WTC11 (cell line): ENCODE measurements at regions of chr17 and their contacts with region 1.

Region 1: DNA sequence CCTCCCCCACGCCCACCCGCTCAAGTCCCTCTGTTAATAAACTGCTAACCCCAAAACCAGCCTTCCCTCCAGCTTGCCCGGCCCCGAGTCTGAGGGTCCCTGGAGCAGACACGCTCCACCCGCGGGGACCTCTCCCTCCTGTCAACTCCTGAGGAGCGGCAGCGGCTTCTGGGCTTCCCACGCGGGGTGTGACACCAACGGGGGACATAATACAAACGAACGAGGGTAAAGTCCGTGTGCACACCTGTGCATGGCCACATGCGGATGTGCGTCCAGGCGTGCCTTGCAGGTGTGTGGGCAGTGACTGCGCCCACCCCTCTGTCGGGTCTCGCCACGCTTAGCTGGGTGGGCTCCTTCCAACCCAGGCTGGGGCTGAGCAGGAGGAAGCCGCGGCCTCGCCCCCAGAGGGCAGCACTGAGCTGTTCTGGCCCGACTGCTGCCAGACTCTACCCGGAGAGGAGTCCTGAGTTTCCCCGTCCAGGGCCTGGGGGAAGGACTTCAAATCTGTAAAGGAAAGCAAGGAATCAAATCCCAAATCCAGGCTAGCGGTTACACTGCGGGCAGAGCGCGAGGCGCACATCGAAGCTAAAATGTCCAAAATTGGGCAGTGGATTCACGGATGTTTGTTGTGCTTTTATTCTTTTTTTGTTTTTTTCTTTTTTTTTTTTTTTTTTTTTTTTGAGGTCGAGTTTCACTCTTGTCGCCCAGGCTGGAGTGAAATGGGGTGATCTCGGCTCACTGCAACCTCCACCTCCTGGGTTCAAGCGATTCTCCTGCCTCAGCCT is 24.2 kb upstream of the KRT17 start:
- DNase-seq: peak; percentile 94
- ATAC-seq: peak; percentile 81
- H3K4me3 Mint-ChIP-seq: peak overlapping the region; percentile 71
- H3K27ac Mint-ChIP-seq: no peak overlapping the region
- H3K4me1 Mint-ChIP-seq: peaks cover 2% of the 10 kb centered on the region
- H3K27me3 Mint-ChIP-seq: no peaks in the 10 kb centered on the region
- CTCF ChIP-seq: peak; percentile 90

Region 2: GRCh38 chr17:41521574-41522261 is 126.9 kb before region 1 on chr17:
- CTCF ChIA-PET with region 1: interaction called, 12 read pairs
- POLR2A ChIA-PET with region 1: no interaction called
- DNase-seq: peak; percentile 57
- ATAC-seq: peak; percentile 46
- H3K4me3 Mint-ChIP-seq: no peak overlapping the region
- H3K27ac Mint-ChIP-seq: peak overlapping the region; percentile 48; the same call in 1 of the 2 replicates
- H3K4me1 Mint-ChIP-seq: peaks cover 25% of the 10 kb centered on the region
- H3K27me3 Mint-ChIP-seq: no peaks in the 10 kb centered on the region; the same call in 1 of the 2 replicates
- CTCF ChIP-seq: no peak

Region 3: DNA sequence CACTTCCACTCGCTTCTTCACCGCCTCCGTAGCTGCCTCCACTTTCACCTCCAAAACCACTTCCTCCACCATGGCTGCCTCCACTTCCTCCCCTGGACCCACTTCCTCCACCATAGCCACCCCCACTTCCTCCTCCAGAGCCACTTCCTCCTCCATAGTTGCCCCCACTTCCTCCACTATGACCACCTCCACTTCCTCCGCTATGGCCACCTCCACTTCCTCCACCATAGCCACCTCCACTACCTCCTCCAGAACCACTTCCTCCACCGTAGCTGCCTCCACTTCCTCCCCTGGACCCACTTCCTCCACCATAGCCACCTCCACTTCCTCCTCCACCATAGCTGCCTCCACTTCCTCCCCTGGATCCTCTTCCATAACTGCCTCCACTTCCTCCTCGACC is 81.3 kb before region 1 on chr17:
- CTCF ChIA-PET with region 1: interaction called, 27 read pairs
- POLR2A ChIA-PET with region 1: no interaction called
- DNase-seq: no peak
- ATAC-seq: no peak
- H3K4me3 Mint-ChIP-seq: no peak overlapping the region
- H3K27ac Mint-ChIP-seq: no peak overlapping the region
- H3K4me1 Mint-ChIP-seq: no peaks in the 10 kb centered on the region
- H3K27me3 Mint-ChIP-seq: peaks cover 22% of the 10 kb centered on the region
- CTCF ChIP-seq: no peak

Region 4: GRCh38 chr17:41602524-41602923 is 46.1 kb before region 1 on chr17:
- CTCF ChIA-PET with region 1: interaction called, 10 read pairs
- POLR2A ChIA-PET with region 1: no interaction called
- DNase-seq: no peak
- ATAC-seq: no peak
- H3K4me3 Mint-ChIP-seq: no peak overlapping the region
- H3K27ac Mint-ChIP-seq: no peak overlapping the region
- H3K4me1 Mint-ChIP-seq: 0 out of 2 replicates have a peak, but pooled peaks cover 3% of the 10 kb centered on the region
- H3K27me3 Mint-ChIP-seq: peaks cover 8% of the 10 kb centered on the region; the same call in 1 of the 2 replicates
- CTCF ChIP-seq: no peak

Region 5: GRCh38 chr17:41635121-41636097 is 13.2 kb before region 1 on chr17:
- CTCF ChIA-PET with region 1: interaction called, 36 read pairs
- POLR2A ChIA-PET with region 1: no interaction called
- DNase-seq: no peak
- ATAC-seq: peak; percentile 62
- H3K4me3 Mint-ChIP-seq: no peak overlapping the region
- H3K27ac Mint-ChIP-seq: peak overlapping the region; percentile 84
- H3K4me1 Mint-ChIP-seq: peaks cover 10% of the 10 kb centered on the region
- H3K27me3 Mint-ChIP-seq: no peaks in the 10 kb centered on the region
- CTCF ChIP-seq: no peak

Region 6: GRCh38 chr17:41797377-41797776 is 148.8 kb after region 1 on chr17:
- CTCF ChIA-PET with region 1: no interaction called
- POLR2A ChIA-PET with region 1: no interaction called
- DNase-seq: no peak
- ATAC-seq: no peak
- H3K4me3 Mint-ChIP-seq: no peak overlapping the region
- H3K27ac Mint-ChIP-seq: no peak overlapping the region
- H3K4me1 Mint-ChIP-seq: peaks cover 51% of the 10 kb centered on the region
- H3K27me3 Mint-ChIP-seq: peaks cover 37% of the 10 kb centered on the region
- CTCF ChIP-seq: no peak

Region 7: DNA sequence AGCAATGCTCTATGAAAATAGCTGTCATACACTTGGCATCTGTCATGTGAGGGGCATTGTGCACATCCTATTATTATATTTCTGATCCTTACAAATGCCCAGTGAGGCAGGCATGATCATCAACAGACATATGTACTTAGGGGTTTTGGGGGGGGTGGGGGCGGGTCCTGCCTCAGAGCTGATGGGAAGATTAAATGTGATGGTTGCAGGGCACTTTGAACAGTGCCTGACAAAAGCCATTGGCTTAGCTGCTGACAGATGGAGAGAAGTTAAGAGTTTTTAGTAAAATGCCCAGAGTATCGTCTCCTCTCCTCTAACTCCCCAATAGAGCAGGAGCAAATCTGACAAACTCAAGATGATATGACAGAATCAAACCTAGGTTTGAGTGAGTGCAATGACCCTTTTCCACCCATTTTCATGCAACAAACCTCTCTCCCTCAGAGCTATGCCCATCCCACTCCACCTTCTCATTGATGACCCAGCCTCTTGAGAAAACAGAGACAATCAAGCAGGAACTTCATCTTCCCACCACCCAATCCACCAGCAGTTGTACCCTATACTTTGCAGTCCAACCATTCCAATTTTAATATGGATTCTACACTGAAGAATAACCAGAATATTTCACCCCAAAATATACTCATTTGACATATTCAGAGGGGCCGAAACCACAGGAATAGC is 211.8 kb after region 1 on chr17:
- CTCF ChIA-PET with region 1: no interaction called
- POLR2A ChIA-PET with region 1: no interaction called
- DNase-seq: no peak
- ATAC-seq: no peak
- H3K4me3 Mint-ChIP-seq: 0 out of 2 replicates have a peak overlapping the region, but pooled peaks have one; percentile 2
- H3K27ac Mint-ChIP-seq: peak overlapping the region; percentile 38
- H3K4me1 Mint-ChIP-seq: peaks cover 24% of the 10 kb centered on the region
- H3K27me3 Mint-ChIP-seq: no peaks in the 10 kb centered on the region
- CTCF ChIP-seq: no peak

Region 8: DNA sequence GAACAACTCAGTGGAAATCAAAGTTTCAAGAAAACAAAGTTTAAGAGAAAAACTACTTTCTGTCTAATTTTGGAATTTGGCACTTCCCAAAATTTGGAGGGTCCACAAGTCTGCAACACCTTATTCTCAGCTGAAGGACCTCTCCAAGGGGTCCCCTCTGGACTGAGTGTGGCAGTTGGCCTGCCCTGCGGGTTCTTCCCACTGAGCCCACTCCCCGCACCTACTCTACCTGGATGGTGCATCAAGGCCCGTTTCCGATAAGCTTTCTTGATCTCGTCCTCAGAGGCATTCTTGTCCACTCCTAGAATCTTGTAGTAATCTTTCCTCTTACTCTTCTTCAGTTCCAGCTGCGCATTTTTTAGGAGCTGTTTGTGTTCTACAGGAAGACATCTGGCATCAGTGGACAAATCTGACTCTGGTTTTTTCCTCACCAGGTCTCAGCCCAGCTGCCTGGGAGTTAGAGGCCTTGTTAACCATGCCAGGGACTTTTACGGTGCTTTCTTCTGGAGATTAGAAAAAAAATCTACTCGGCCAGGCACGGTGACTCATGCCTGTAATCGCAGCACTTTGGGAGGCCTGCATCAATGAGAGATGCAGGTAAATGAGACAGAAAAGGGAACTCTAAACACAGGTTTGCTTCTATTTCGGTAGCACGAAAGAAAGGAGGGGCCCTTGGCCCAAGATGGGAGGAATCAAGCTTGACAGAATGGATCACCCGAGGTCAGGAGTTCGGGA is 333.6 kb after region 1 on chr17:
- CTCF ChIA-PET with region 1: no interaction called
- POLR2A ChIA-PET with region 1: no interaction called
- DNase-seq: no peak
- ATAC-seq: no peak
- H3K4me3 Mint-ChIP-seq: no peak overlapping the region
- H3K27ac Mint-ChIP-seq: no peak overlapping the region; the same call in 1 of the 2 replicates
- H3K4me1 Mint-ChIP-seq: no peaks in the 10 kb centered on the region
- H3K27me3 Mint-ChIP-seq: no peaks in the 10 kb centered on the region
- CTCF ChIP-seq: no peak